Panc1 (cell line): ENCODE measurements at regions of chr7 and their contacts with region 1.

Region 1: GRCh38 chr7:132882714-132883428 is 199.0 kb downstream of the CHCHD3 start:
- DNase-seq: no peak
- ATAC-seq: no peak
- H3K4me3 ChIP-seq: no peak overlapping the region
- H3K27ac ChIP-seq: no peak overlapping the region
- H3K4me1 ChIP-seq: no peaks in the 10 kb centered on the region
- H3K27me3 ChIP-seq: no peaks in the 10 kb centered on the region
- CTCF ChIP-seq: no peak

Region 2: DNA sequence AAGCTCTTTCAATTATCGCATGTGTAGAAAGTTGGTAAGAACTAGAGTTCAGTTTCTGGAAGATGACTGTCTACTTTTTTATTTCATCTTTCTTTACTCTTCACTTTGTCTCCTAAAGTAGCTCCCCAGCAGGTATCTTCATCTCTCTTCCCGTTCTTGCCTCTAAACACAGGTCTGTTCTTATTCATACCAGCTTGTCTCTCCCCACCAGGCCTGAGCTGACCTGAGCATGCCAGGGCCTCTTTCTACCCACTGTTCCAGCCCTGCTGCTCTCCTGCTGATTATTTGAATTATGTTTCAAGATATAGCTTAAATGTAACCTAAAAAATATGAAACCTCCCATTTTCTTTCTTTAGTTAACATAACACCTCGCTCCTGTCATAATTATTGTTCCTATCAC is 858.2 kb after region 1 on chr7:
- CTCF ChIA-PET with region 1: no interaction called
- POLR2A ChIA-PET with region 1: interaction called, 15 read pairs
- in situ Hi-C with region 1: no loop called
- intact Hi-C with region 1: no loop called
- DNase-seq: no peak
- ATAC-seq: no peak
- H3K4me3 ChIP-seq: no peak overlapping the region
- H3K27ac ChIP-seq: no peak overlapping the region
- H3K4me1 ChIP-seq: no peaks in the 10 kb centered on the region
- H3K27me3 ChIP-seq: no peaks in the 10 kb centered on the region
- CTCF ChIP-seq: no peak

Region 3: DNA sequence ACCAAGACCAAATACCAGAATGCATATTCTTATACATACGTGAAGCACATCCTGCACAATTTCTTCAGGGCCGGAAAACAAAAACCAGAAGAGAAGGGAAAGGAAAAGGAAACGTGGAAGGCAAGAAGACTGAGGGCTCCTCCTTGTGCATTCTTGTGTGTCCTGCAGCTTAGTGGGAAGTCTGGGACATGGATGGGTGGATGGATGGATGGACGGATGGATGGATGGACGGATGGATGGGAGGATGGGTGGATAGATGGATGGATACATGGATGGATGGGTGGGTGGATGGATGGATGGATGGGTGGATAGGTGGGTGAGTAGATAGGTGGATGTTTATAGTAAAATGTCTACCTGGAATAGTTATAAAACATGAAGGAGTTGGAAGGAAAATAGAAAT is 1464.7 kb after region 1 on chr7:
- CTCF ChIA-PET with region 1: no interaction called
- POLR2A ChIA-PET with region 1: no interaction called
- in situ Hi-C with region 1: no loop called
- intact Hi-C with region 1: loop called (anchors 5 kb)
- DNase-seq: no peak
- ATAC-seq: no peak
- H3K4me3 ChIP-seq: no peak overlapping the region
- H3K27ac ChIP-seq: no peak overlapping the region
- H3K4me1 ChIP-seq: no peaks in the 10 kb centered on the region
- H3K27me3 ChIP-seq: peaks cover 21% of the 10 kb centered on the region
- CTCF ChIP-seq: peak; percentile 28